ENCODE measurements at regions of chr10 and their contacts with region 1.

Region 1: DNA sequence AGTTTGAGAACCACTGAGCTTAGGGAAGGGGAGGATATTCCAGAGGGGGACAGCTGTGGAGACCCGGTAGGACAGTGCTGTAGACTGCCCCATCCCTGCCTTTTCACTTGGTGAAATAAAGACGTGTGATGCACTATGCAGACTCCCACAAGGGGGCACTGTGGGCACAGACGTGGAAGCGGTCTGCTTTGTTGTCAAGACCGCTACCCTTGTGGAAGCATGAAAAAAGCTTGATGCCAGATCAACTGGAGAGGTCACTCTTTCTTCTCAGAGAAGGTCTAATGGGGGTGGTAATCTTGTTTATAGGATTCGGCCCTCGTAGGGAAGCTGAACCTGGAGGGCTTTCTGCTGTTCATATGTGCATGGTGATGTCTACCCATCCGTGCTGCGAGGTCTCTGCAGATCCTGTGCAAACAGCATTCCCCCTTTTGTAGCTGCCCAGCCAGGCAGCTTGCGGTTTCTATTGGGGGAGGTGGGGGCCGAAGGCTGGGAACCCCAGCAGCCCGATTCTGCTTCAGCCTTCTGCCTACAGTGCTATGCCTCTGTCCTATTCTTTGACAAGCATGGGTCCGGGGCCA is 13.7 kb downstream of the RPS24 start:
- DNase-seq: peak; percentile 54 to 65 (median 65)
- H3K4me3 ChIP-seq: no peak overlapping the region
- H3K4me3 Mint-ChIP-seq: peak overlapping the region in 1 of 2 donors; percentile 20
- H3K27ac ChIP-seq: no peak overlapping the region
- H3K27ac Mint-ChIP-seq: peak overlapping the region in 1 of 7 donors; percentile 57
- H3K4me1 ChIP-seq: peaks cover 0 to 8% of the 10 kb centered on the region in 2 donors
- H3K4me1 Mint-ChIP-seq: peaks cover 19% of the 10 kb centered on the region
- H3K27me3 ChIP-seq: no peaks in the 10 kb centered on the region
- H3K27me3 Mint-ChIP-seq: peaks cover 0 to 2% (median 1%) of the 10 kb centered on the region in 3 donors
- CTCF ChIP-seq: peak; percentile 90

Region 2: GRCh38 chr10:78312197-78313047 is 265.0 kb after region 1 on chr10:
- intact Hi-C with region 1: loop called in 1 of 2 experiments (anchors 5 kb)
- DNase-seq: no peak
- H3K4me3 ChIP-seq: no peak overlapping the region
- H3K4me3 Mint-ChIP-seq: no peak overlapping the region
- H3K27ac ChIP-seq: no peak overlapping the region
- H3K27ac Mint-ChIP-seq: no peak overlapping the region
- H3K4me1 ChIP-seq: no peaks in the 10 kb centered on the region
- H3K4me1 Mint-ChIP-seq: no peaks in the 10 kb centered on the region
- H3K27me3 ChIP-seq: no peaks in the 10 kb centered on the region
- H3K27me3 Mint-ChIP-seq: peaks cover 4 to 9% (median 6%) of the 10 kb centered on the region in 3 donors
- CTCF ChIP-seq: no peak

Region 3: DNA sequence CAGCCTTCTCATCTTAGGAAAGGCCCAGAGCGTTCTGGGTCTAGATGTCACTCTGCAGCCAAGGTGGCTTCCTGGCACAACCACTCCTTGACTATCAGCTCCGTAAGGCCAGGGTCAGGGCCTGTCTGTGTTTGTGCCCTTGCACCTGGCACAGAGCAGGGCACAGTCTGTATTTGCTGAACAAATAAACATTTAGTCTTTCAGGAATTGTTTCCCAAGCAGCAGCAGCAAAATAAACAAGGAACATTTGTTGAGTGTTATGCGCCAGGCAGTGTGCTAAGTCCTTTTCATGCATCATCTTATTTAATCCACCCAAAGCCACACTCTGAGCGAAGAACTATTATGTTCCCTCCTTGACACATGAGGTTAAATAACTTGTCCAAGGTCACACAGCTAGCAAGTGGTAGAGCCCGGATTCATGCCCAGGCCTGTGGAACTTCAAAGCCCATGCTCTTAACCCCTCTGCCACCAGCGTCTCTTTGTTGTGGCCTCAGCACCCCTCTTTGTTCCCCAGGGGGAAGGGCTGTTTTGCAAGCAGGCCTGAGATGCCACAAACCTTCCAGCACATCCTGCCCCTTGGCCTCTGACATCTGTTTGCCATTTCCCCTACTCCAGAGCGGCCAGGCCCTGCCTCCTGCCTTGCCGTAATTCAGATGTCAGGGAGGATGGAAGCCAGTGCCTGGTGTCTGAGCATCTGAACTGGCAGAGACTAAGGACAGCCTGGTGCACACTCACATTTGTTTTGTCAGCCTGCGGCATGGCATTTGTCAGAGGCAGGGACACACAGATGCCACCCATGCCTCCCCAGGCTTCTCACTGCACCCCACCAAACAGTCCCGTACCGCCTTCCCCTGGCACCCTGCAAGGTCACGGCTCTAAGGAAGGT is 695.6 kb after region 1 on chr10:
- intact Hi-C with region 1: loop called in 1 of 2 experiments (anchors 10 kb)
- DNase-seq: no peak
- H3K4me3 ChIP-seq: no peak overlapping the region
- H3K4me3 Mint-ChIP-seq: no peak overlapping the region
- H3K27ac ChIP-seq: no peak overlapping the region
- H3K27ac Mint-ChIP-seq: no peak overlapping the region
- H3K4me1 ChIP-seq: peaks cover 22 to 23% of the 10 kb centered on the region in 2 donors
- H3K4me1 Mint-ChIP-seq: peaks cover 27% of the 10 kb centered on the region
- H3K27me3 ChIP-seq: no peaks in the 10 kb centered on the region
- H3K27me3 Mint-ChIP-seq: peaks cover 0 to 12% (median 6%) of the 10 kb centered on the region in 3 donors
- CTCF ChIP-seq: no peak

Measured in CD14-positive monocyte (primary cell).